Activated CD8-positive, alpha-beta T cell treated with anti-CD3 and anti-CD28 coated beads, Interleukin-2, amount 10 ng/mL, durations not matched to agents 7 days and 5 days (primary cell): ENCODE measurements at regions of chr9 and their contacts with region 1.

Region 1: DNA sequence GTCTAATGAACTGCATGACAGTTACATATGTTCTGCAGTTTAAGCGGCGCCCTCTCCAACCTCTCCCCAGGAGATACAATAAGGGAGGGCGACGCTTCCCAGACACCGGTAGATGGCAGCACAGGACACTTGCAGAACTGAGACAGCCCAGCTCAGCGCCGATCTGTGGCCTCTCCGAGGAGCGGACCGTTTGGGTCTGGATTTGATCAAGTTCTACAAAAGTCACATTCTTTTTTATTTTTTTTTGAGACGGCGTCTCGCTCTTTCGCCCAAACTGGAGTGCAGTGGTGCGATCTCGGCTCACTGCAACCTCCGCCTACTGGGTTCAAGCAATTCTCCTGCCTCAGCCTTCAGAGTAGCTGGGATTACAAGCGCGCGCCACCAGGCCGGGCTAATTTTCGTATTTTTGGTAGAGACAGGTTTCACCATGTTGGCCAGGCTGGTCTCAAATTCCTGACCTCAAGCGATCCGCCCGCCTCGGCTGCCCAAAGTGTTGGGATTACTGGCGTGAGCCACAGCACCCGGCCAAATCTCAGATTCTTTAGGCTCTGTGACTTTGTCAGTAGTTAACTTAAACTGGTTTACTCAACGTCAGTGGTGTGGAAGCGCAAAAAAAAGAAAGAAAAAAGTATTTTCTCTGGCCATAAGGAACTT is 1.4 kb upstream of the ATOSB start:
- DNase-seq: peak; percentile 95
- ATAC-seq: peak; percentile 56
- H3K4me3 Mint-ChIP-seq: peak overlapping the region; percentile 95
- H3K27ac Mint-ChIP-seq: peak overlapping the region; percentile 92
- H3K4me1 Mint-ChIP-seq: peaks cover 36% of the 10 kb centered on the region
- H3K27me3 Mint-ChIP-seq: no peaks in the 10 kb centered on the region

Region 2: DNA sequence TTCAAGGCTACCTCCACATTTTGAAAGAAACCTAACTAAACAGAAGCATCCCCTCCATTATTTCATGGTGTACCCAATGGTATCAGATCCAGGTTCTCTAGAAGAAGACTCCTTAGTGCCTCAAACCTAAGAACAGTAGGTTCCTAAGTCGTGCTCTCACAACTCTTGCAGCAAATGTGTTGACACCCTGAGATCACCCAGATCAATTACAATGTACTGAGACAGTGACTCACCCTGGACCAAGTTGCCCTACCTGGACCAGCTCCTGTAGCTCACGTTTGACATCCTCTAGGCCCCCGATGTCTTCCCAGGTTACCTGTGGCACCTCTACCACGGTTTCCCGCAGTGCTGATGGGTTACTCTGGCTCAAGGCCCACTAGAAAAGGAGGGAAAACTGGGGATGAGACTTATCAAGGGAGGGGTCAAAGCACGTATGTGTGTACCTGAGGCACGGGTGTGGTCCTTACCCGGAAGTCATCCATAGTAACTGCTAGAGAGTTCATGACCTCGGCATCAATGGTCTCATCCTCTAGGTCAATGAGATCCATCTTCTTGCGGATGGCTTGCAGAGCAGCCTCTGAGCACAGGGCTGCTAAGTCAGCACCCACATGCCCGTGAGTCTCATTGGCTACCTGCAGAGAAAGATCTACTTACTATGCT is 56.3 kb before region 1 on chr9:
- CTCF ChIA-PET with region 1: no interaction called
- POLR2A ChIA-PET with region 1: no interaction called
- DNase-seq: no peak
- ATAC-seq: no peak
- H3K4me3 Mint-ChIP-seq: no peak overlapping the region
- H3K27ac Mint-ChIP-seq: no peak overlapping the region
- H3K4me1 Mint-ChIP-seq: no peaks in the 10 kb centered on the region
- H3K27me3 Mint-ChIP-seq: no peaks in the 10 kb centered on the region

Region 3: GRCh38 chr9:35079426-35080341 is 37.3 kb before region 1 on chr9 and contains the start of gene FANCG:
- CTCF ChIA-PET with region 1: interaction called, 3 read pairs
- POLR2A ChIA-PET with region 1: interaction called, 14 read pairs
- DNase-seq: peak; percentile 90
- ATAC-seq: peak; percentile 91
- H3K4me3 Mint-ChIP-seq: peak within 1 kb of the TSS; percentile 95
- H3K27ac Mint-ChIP-seq: peak within 1 kb of the TSS; percentile 99
- H3K4me1 Mint-ChIP-seq: peaks cover 28% of the 10 kb centered on the region
- H3K27me3 Mint-ChIP-seq: no peaks in the 10 kb centered on the region
- total RNA-seq, gene FANCG: 125 to 136 TPM

Region 4: GRCh38 chr9:35102926-35103659 is 13.9 kb before region 1 on chr9 and contains the start of gene STOML2:
- CTCF ChIA-PET with region 1: interaction called, 10 read pairs
- POLR2A ChIA-PET with region 1: interaction called, 33 read pairs
- DNase-seq: peak; percentile 96
- ATAC-seq: peak; percentile 93
- H3K4me3 Mint-ChIP-seq: peak within 1 kb of the TSS; percentile 97
- H3K27ac Mint-ChIP-seq: peak within 1 kb of the TSS; percentile 96
- H3K4me1 Mint-ChIP-seq: peaks cover 40% of the 10 kb centered on the region
- H3K27me3 Mint-ChIP-seq: no peaks in the 10 kb centered on the region
- total RNA-seq, gene STOML2: 130 to 138 TPM

Region 5: DNA sequence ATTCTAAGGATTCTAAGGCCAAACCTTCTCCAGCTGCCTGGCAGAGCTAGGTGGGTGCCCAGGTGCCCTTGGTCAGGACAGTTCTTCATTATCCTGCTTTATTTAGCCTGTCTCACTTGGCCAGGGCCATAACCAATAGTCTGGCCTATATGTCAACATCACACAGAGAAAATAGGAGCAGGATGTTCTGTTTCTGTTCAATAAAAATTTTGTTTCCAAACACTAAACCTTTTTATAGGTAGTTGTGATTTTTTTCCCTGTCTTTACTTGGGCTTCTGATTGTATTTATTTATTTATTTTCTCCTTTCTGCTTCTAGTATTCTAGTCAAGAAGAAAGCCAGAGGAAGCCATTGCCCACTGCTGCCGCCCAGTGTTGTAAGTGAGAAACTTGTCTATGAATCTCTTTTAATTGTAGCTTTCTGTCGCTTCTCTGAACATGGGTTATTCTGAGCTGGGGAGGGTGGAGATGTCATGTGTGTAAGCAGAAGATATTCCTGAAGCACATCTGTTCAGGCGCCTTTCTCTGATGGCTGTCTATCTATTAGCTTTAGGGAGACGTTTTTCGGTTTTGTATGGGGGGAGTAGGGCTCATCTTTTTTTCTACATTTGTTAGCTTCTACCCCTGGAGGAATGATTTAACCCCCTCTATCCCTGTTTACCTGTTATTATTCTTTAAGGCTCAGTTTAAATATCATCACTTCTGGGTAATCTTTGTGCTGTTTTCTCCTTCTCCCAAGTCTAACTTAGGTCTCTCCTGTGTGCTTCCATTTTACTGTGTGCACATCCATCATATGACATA is 141.8 kb after region 1 on chr9:
- CTCF ChIA-PET with region 1: interaction called, 77 read pairs
- POLR2A ChIA-PET with region 1: interaction called, 4 read pairs
- DNase-seq: peak; percentile 62
- ATAC-seq: no peak
- H3K4me3 Mint-ChIP-seq: no peak overlapping the region
- H3K27ac Mint-ChIP-seq: no peak overlapping the region
- H3K4me1 Mint-ChIP-seq: peaks cover 4% of the 10 kb centered on the region
- H3K27me3 Mint-ChIP-seq: peaks cover 6% of the 10 kb centered on the region

Region 6: GRCh38 chr9:35481347-35481975 is 364.4 kb after region 1 on chr9:
- CTCF ChIA-PET with region 1: interaction called, 20 read pairs
- POLR2A ChIA-PET with region 1: interaction called, 3 read pairs
- DNase-seq: peak; percentile 43
- ATAC-seq: no peak
- H3K4me3 Mint-ChIP-seq: no peak overlapping the region
- H3K27ac Mint-ChIP-seq: no peak overlapping the region
- H3K4me1 Mint-ChIP-seq: no peaks in the 10 kb centered on the region
- H3K27me3 Mint-ChIP-seq: peaks cover 4% of the 10 kb centered on the region

Region 7: GRCh38 chr9:35553670-35554543 is 436.9 kb after region 1 on chr9:
- CTCF ChIA-PET with region 1: interaction called, 30 read pairs
- POLR2A ChIA-PET with region 1: no interaction called
- DNase-seq: peak; percentile 58
- ATAC-seq: peak; percentile 68
- H3K4me3 Mint-ChIP-seq: no peak overlapping the region
- H3K27ac Mint-ChIP-seq: no peak overlapping the region
- H3K4me1 Mint-ChIP-seq: no peaks in the 10 kb centered on the region
- H3K27me3 Mint-ChIP-seq: peaks cover 2% of the 10 kb centered on the region